Activated CD4-positive, alpha-beta memory T cell treated with anti-CD3 and anti-CD28 coated beads, Interleukin-2, amount 10 ng/mL, durations not matched to agents 7 days and 5 days (primary cell): ENCODE measurements at regions of chr7 and their contacts with region 1.

Region 1: GRCh38 chr7:70775570-70776156 is 356.3 kb upstream of the GALNT17 start:
- DNase-seq: no peak
- H3K4me3 Mint-ChIP-seq: no peak overlapping the region
- H3K27ac Mint-ChIP-seq: peak overlapping the region; percentile 40
- H3K4me1 Mint-ChIP-seq: peaks cover 56% of the 10 kb centered on the region
- H3K27me3 Mint-ChIP-seq: no peaks in the 10 kb centered on the region

Region 2: DNA sequence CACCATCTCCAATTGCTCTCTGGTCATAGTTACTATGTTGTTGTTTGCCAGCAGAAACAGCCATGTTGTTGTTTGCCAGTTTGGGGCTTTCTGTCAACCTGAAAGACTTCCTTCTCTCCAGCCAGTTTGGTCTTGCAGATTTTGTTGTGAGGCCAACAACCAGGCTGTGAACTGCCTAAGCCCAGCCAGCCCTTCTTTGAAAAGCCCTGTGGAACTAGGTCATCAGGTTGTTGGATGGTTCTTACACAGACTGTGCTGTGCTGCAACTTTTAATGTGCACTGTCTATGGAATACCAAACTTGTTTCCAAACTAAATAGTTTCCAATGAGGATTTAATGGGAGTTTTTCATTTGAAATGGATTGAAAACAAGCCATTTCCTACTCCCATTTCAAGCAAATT is 236.5 kb before region 1 on chr7:
- CTCF ChIA-PET with region 1: no interaction called
- POLR2A ChIA-PET with region 1: no interaction called
- DNase-seq: no peak
- H3K4me3 Mint-ChIP-seq: no peak overlapping the region
- H3K27ac Mint-ChIP-seq: no peak overlapping the region
- H3K4me1 Mint-ChIP-seq: no peaks in the 10 kb centered on the region
- H3K27me3 Mint-ChIP-seq: no peaks in the 10 kb centered on the region

Region 3: DNA sequence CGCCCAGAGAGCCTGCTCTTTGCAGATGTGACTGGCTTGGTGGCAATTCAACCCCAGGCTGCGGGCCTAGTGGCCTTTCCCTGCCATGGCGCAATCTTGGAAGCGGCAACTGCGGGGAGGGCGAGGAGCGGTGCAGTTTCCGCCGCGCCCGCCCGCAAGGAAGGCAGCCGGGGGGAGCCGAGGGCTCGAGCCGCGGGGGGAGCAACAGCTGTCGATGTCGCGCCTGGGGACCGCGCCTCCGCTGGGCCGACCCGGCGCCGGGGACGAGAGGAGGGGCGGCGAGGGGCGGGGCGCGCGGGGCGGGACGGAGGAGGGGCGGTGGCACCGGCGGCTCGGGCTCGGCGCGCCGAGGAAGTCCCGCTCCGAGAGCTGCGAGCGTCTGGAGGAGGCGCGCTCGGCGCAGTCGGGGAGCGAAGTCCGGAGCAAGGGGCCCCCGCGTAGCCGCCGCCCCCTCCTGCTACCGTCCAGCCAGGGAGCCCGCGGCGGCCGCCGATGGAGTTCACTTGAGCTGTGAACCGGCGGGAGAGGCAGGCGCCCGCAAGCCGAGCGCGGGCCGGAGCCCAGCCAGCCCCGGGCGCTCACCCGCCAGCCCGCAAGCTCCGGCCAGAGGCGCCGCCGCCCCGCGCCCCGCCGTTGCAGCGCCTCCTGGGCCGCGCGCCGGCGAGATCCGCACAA is 81.8 kb before region 1 on chr7:
- CTCF ChIA-PET with region 1: interaction called, 5 read pairs
- POLR2A ChIA-PET with region 1: interaction called, 26 read pairs
- DNase-seq: peak; percentile 48
- H3K4me3 Mint-ChIP-seq: peak overlapping the region; percentile 61
- H3K27ac Mint-ChIP-seq: no peak overlapping the region
- H3K4me1 Mint-ChIP-seq: peaks cover 22% of the 10 kb centered on the region
- H3K27me3 Mint-ChIP-seq: peaks cover 33% of the 10 kb centered on the region

Region 4: DNA sequence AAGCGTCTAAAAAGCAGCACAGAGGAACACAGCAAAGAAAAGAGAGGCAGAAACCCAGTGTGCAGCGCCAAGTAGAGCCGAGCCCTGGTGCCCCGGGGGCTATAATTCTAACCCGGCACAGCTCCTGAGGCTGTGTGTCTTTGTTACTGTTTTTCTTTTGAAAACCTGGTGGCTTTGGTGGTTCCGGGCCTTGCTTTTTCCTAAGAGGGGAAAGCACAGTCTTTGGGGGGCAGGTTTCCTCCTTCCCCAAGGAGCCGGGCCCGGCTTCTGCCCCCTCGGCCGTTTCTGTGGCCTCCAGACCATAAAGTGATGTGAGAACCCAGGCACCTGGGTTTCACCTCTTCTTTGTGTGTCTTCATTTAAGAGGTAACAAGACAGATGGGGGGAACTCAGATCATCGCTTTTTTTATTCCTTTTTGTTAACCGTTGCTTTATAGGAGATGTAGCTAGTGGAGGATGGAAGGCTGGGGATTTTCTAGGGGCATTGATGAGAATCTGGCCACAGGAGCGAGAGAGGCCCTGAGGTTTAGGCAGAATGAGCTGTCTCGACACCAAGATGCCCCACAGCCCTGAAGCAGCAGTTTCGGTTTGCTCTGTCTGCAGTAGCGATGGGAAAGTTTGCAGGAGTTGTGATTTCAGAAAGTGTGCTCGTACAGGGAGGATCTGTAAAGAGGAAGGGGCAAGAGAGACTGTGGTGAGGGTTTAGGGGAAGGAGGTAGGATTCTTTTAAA is 11.5 kb before region 1 on chr7:
- CTCF ChIA-PET with region 1: interaction called, 7 read pairs
- POLR2A ChIA-PET with region 1: interaction called, 32 read pairs
- DNase-seq: peak; percentile 41
- H3K4me3 Mint-ChIP-seq: peak overlapping the region; percentile 49
- H3K27ac Mint-ChIP-seq: peak overlapping the region; percentile 79
- H3K4me1 Mint-ChIP-seq: peaks cover 21% of the 10 kb centered on the region
- H3K27me3 Mint-ChIP-seq: no peaks in the 10 kb centered on the region

Region 5: GRCh38 chr7:70788276-70788675 is 12.6 kb after region 1 on chr7:
- CTCF ChIA-PET with region 1: interaction called, 16 read pairs
- POLR2A ChIA-PET with region 1: interaction called, 75 read pairs
- DNase-seq: peak; percentile 72
- H3K4me3 Mint-ChIP-seq: peak overlapping the region; percentile 38
- H3K27ac Mint-ChIP-seq: peak overlapping the region; percentile 93
- H3K4me1 Mint-ChIP-seq: peaks cover 36% of the 10 kb centered on the region
- H3K27me3 Mint-ChIP-seq: no peaks in the 10 kb centered on the region